HCT116 (cell line): ENCODE measurements at regions of chr20 and their contacts with region 1.

Region 1: DNA sequence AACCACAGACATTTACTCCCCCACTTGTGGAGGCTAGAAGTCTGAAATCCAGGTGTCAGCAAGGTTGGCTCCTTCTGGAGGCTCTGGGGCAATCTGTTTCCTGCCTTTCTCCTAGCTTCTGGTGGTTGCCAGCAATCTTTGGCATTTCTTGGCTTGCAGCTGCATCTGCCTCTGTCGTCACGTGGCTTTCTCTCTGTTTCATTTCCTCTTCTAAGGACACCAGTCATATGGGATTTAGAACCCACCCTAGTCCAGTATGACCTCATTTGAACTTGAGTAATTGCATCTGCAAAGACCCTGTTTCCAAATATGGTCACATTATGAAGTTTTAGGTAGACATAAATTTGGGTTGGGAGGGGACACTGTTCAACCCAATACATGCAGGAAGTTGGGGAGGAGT is 56.2 kb upstream of the EPB41L1 start:
- DNase-seq: no peak
- ATAC-seq: no peak
- H3K4me3 ChIP-seq: no peak overlapping the region
- H3K27ac ChIP-seq: no peak overlapping the region
- H3K4me1 ChIP-seq: peaks cover 49 to 73% of the 10 kb centered on the region in 2 experiments
- H3K27me3 ChIP-seq: no peaks in the 10 kb centered on the region
- CTCF ChIP-seq: no peak
- POLR2A ChIP-seq: no peak
- RAD21 ChIP-seq: no peak

Region 2: DNA sequence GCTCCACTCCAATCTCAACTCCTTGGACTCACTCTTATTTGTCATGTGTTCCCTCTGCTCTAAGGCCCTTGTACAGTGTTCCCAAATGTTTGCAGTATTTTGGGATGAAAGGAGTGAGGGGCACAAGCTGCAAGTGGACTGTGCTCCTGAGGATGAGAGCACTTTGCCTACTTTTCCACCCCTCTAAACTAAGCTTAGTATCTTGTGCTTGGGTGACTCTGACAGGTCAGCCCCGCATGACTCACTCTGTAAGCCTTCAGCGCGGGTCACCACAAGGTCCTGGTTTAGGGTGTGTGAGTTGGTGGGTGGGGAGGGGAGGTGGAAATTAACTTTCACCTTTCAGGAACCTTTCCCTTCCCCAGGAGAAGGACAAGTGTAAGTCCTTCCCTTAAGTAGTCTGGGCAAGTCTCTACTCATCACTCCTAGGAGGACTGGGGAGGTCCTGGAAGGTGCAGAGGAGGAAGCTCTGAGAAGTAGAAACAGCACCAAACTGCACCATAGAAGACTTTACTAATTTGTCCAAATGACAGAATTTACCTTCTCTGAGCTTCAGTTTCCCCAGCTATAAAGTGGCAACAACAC is 12.6 kb before region 1 on chr20:
- CTCF ChIA-PET with region 1: interaction called, 3 read pairs
- POLR2A ChIA-PET with region 1: interaction called, 20 read pairs
- RAD21 ChIA-PET with region 1: no interaction called
- intact Hi-C with region 1: no loop called
- DNase-seq: peak; percentile 84
- ATAC-seq: peak; percentile 83
- H3K4me3 ChIP-seq: peak overlapping the region; percentile 8 to 46
- H3K27ac ChIP-seq: peak overlapping the region; percentile 96
- H3K4me1 ChIP-seq: peaks cover 56 to 79% of the 10 kb centered on the region in 2 experiments
- H3K27me3 ChIP-seq: no peaks in the 10 kb centered on the region
- CTCF ChIP-seq: no peak
- POLR2A ChIP-seq: no peak
- RAD21 ChIP-seq: 0 out of 2 replicates have a peak, but pooled peaks have one; percentile 15